ENCODE measurements at regions of chr19 and their contacts with region 1.

Region 1: DNA sequence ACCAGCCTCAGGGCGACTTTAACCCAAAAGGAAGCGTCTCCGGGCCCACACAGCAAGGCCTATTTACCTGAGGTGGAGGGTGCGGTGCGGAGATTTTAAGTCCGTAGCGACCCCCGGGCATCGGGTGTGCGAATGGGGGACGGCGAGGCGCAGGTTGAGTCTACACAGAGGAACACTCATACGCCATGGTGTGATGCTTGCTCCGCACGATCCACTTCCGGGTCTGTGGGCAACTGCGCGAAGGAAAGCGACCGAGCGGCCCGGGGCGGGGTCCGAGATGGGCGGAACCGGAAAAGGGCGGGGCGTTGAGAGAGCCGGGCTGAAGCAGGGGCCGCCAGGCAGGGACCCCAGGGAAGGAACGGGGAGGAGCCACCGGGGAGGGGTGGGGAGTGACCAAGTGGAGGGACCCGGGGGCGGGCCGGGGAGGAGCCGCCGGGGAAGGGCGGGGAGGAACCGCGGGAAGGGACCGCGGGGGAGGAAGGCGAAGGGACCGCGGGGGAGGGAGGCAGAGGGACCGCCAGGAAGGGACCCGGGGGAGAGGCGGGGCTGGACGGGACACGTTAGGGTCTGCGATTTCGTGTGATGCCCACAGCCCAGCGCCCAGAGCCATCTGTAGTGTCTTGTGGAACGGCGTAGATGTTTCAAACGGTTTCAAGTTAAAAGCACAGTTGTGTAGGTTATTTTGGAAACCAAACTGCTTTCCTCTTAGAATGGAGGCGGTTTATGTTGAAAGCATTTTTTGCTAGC is at the start of gene ZNF160:
- DNase-seq: peak; percentile 99
- H3K4me3 ChIP-seq: peak within 1 kb of the TSS; percentile 100
- H3K4me3 Mint-ChIP-seq: peak within 1 kb of the TSS; percentile 83
- H3K27ac Mint-ChIP-seq: peak within 1 kb of the TSS; percentile 76
- H3K4me1 ChIP-seq: no peaks in the 10 kb centered on the region
- H3K4me1 Mint-ChIP-seq: peaks cover 13% of the 10 kb centered on the region
- H3K27me3 ChIP-seq: no peaks in the 10 kb centered on the region
- H3K27me3 Mint-ChIP-seq: no peaks in the 10 kb centered on the region
- CTCF ChIP-seq: no peak
- total RNA-seq, gene ZNF160: 30.6 and 33.3 TPM in 2 replicates

Region 2: GRCh38 chr19:53132141-53132991 is 29.0 kb after region 1 on chr19 and contains the start of gene ZNF415:
- CTCF ChIA-PET with region 1: no interaction called
- POLR2A ChIA-PET with region 1: no interaction called
- intact Hi-C with region 1: loop called (anchors 2 kb)
- DNase-seq: peak; percentile 90 to 93
- H3K4me3 ChIP-seq: peak within 1 kb of the TSS; percentile 64
- H3K4me3 Mint-ChIP-seq: peak within 1 kb of the TSS; percentile 71
- H3K27ac Mint-ChIP-seq: peak within 1 kb of the TSS; percentile 56
- H3K4me1 ChIP-seq: peaks cover 2% of the 10 kb centered on the region
- H3K4me1 Mint-ChIP-seq: peaks cover 14% of the 10 kb centered on the region
- H3K27me3 ChIP-seq: no peaks in the 10 kb centered on the region
- H3K27me3 Mint-ChIP-seq: no peaks in the 10 kb centered on the region
- CTCF ChIP-seq: no peak
- total RNA-seq, gene ZNF415: 12.5 and 14.9 TPM in 2 replicates